Psoas muscle (tissue), 8 donors: ENCODE measurements at regions of chr1 and their contacts with region 1.

Region 1: GRCh38 chr1:224116131-224116530 is 2.2 kb downstream of the FBXO28 start:
- DNase-seq: no peak
- ATAC-seq: peak in 1 of 4 donors; percentile 43
- H3K4me3 ChIP-seq: no peak overlapping the region
- H3K27ac ChIP-seq: no peak overlapping the region
- H3K4me1 ChIP-seq: peaks cover 24% of the 10 kb centered on the region
- H3K27me3 ChIP-seq: peaks cover 0 to 3% (median 0%) of the 10 kb centered on the region in 3 donors
- CTCF ChIP-seq: peak; percentile 69

Region 2: GRCh38 chr1:224141693-224142092 is 25.6 kb after region 1 on chr1:
- intact Hi-C with region 1: no loop called
- DNase-seq: no peak
- ATAC-seq: no peak
- H3K4me3 ChIP-seq: no peak overlapping the region
- H3K27ac ChIP-seq: no peak overlapping the region
- H3K4me1 ChIP-seq: no peaks in the 10 kb centered on the region
- H3K27me3 ChIP-seq: no peaks in the 10 kb centered on the region
- CTCF ChIP-seq: no peak

Region 3: DNA sequence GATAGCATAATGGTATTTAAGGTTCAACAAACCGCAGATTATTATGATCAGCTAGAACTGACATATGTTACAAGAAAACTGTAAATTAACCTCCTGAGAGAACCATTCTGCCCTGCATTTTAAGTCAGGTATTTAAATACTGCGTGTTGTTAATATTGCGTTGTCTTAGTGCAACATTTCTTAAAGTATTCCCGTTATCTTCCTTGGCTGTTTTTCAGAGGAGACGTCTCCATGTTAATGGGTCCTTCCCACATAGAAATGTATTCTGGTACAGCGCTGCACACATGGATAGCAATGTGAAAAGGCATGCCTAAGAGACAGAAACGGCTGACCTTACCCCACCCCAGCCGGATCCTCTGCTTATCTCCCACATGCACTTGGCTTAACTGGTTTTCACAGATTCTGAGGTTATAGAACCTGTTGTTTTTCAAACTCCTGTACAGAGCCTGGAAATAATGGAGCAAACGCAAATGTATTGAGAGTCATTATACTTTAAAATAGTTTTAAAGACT is 44.1 kb after region 1 on chr1:
- intact Hi-C with region 1: no loop called
- DNase-seq: no peak
- ATAC-seq: no peak
- H3K4me3 ChIP-seq: no peak overlapping the region
- H3K27ac ChIP-seq: no peak overlapping the region
- H3K4me1 ChIP-seq: no peaks in the 10 kb centered on the region
- H3K27me3 ChIP-seq: no peaks in the 10 kb centered on the region
- CTCF ChIP-seq: no peak

Region 4: GRCh38 chr1:224329842-224330753 is 214.0 kb after region 1 on chr1 and contains the start of gene NVL:
- intact Hi-C with region 1: loop called (anchors 1 to 5 kb)
- DNase-seq: peak; percentile 83 to 93
- ATAC-seq: peak; percentile 96 to 98 (median 98)
- H3K4me3 ChIP-seq: peak within 1 kb of the TSS; percentile 76
- H3K27ac ChIP-seq: peak within 1 kb of the TSS; percentile 94
- H3K4me1 ChIP-seq: peaks cover 17% of the 10 kb centered on the region
- H3K27me3 ChIP-seq: no peaks in the 10 kb centered on the region
- CTCF ChIP-seq: no peak
- total RNA-seq, gene NVL: 6.3 to 11.0 (median 8.1) TPM

Region 5: DNA sequence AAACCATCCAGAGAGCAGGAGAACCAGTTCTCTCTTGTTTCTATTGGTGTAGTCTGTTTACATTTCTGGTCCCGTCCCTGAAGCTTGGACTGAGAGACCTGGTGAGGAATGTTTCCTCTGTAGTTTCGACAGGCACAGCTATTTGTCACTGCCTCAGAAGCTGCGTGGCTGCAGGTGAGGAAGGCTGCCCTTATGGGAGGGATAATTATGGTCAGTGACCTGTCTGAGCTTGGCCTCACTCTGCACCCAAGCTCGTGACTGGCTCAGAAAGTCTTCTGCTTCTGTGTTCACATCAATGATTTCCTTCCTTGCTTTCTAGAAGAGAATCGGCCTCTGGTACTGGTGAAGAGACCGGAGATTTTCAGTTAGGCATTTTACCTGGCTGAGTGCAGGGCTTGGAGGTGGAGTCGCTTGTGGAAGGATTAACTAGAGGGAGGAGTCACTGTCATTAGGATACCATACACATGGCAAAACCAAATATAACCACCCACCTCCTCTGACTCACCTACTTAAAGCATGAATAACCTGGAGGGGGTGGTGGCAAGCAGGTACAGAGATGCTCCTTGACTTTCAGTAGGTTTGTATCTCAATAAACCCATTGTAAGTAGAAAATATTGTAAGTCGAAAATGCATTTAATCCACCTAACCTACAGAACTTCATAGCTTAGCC is 338.4 kb after region 1 on chr1:
- intact Hi-C with region 1: loop called (anchors 2 to 5 kb)
- DNase-seq: no peak
- ATAC-seq: no peak
- H3K4me3 ChIP-seq: no peak overlapping the region
- H3K27ac ChIP-seq: no peak overlapping the region
- H3K4me1 ChIP-seq: peaks cover 20% of the 10 kb centered on the region
- H3K27me3 ChIP-seq: no peaks in the 10 kb centered on the region
- CTCF ChIP-seq: no peak